HAP-1 (cell line): ENCODE measurements at regions of chr5 and their contacts with region 1.

Region 1: GRCh38 chr5:151740336-151740942 is 18.0 kb downstream of the ATOX1 start:
- DNase-seq: peak; percentile 55 to 68
- H3K4me3 ChIP-seq: no peak overlapping the region
- H3K4me1 ChIP-seq: no peaks in the 10 kb centered on the region
- H3K27me3 ChIP-seq: no peaks in the 10 kb centered on the region

Region 2: GRCh38 chr5:151596828-151597539 is 143.5 kb before region 1 on chr5:
- in situ Hi-C with region 1: no loop called
- DNase-seq: no peak
- H3K4me3 ChIP-seq: no peak overlapping the region
- H3K4me1 ChIP-seq: no peaks in the 10 kb centered on the region
- H3K27me3 ChIP-seq: no peaks in the 10 kb centered on the region

Region 3: DNA sequence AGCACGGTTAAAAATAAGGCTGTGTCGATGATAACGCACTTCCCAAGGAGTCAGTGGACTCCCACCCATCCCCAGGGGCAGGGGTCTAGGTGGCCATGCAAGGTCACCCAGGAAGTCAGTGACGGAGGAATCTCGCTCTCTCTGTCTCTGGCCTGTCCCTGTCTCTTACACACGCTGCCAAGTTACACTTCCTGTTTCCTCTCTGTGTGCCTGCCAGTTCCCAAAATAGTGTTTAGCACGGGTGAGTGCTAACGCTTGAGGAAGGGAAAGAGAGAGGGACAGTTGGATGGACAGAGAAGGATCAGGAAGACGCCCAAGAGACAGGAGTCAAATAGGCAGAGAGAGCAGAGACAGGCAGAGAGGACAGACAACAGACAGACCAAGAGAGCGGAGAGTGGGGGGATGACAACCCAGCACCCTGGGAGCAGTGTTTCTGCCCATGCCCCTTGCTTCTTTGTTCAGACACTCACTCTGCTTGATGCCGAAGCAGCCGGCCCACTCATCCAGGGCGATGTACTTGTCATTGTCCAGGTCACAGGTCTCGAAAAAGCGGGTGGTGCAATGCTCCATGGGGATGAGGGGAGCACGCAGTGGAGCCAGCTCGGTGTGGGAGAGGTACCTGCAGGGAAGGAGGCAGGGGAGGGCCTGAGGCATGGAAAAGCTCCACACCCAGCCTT is 76.7 kb before region 1 on chr5:
- in situ Hi-C with region 1: loop called (anchors 5 kb)
- DNase-seq: no peak
- H3K4me3 ChIP-seq: no peak overlapping the region
- H3K4me1 ChIP-seq: no peaks in the 10 kb centered on the region
- H3K27me3 ChIP-seq: no peaks in the 10 kb centered on the region